CD4-positive, alpha-beta T cell (primary cell): ENCODE measurements at regions of chr2 and their contacts with region 1.

Region 1: GRCh38 chr2:231463698-231464575 is at the start of gene NCL:
- DNase-seq: peak; percentile 75 to 98 (median 81)
- ATAC-seq: peak; percentile 67
- H3K4me3 ChIP-seq: peak within 1 kb of the TSS; percentile 91
- H3K4me3 Mint-ChIP-seq: peak within 1 kb of the TSS; percentile 93
- H3K27ac ChIP-seq: peak within 1 kb of the TSS; percentile 96 to 97
- H3K27ac Mint-ChIP-seq: peak within 1 kb of the TSS; percentile 99
- H3K4me1 ChIP-seq: peaks cover 57% of the 10 kb centered on the region
- H3K4me1 Mint-ChIP-seq: peaks cover 57% of the 10 kb centered on the region
- H3K27me3 ChIP-seq: no peaks in the 10 kb centered on the region
- H3K27me3 Mint-ChIP-seq: no peaks in the 10 kb centered on the region
- CTCF ChIP-seq: no peak
- total RNA-seq, gene NCL: 387 to 395 TPM

Region 2: DNA sequence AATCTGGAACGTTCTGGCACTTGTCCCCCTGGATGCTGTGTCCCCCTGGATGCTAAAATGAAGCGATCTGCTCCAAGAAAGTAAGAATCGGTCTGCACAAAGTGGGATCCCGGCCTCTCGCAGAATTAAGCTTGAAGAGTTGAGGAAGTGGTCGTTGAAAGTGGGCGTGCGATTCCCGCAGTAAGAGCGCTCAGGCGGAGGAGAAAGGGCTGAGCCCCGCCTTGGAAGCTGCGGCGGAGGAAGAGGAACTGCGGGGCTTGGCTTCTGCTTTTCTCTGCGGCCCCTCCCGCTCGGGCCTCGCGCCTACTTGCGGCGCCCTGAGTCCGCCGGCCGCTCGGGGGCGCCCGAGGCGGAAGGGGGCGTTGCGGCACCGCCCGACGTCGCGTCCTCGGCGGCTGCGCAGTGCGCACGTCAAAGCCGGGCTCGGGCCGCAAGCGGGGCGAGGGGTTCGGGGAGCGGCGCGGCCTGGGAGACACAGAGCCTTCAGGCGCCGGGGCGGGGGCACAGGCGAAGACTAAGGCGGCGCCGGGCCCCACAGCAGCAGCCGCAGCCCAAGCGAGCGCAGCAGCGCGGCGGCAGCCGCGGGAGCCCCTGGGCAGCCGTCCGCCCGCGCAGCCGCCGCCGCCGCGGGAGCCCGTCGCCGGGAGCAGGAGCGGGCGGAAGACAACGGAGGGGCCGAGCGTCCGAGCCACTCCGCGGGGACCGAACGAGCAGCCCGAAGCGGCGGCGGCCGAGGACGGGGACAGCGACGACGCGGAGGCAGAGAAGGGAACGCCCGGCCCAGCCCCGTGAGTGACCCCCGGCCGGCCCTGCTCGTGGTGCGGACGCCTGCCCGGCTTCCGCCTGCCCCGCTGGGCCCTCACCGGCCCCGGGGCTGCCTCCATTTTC is 751.2 kb before region 1 on chr2 and contains the start of gene CAB39:
- CTCF ChIA-PET with region 1: no interaction called
- POLR2A ChIA-PET with region 1: interaction called, 5 read pairs
- intact Hi-C with region 1: loop called in 1 of 2 experiments (anchors 10 kb)
- DNase-seq: peak; percentile 73 to 97 (median 84)
- ATAC-seq: peak; percentile 81
- H3K4me3 ChIP-seq: peak within 1 kb of the TSS; percentile 88
- H3K4me3 Mint-ChIP-seq: peak within 1 kb of the TSS; percentile 93
- H3K27ac ChIP-seq: peak within 1 kb of the TSS; percentile 63 to 84
- H3K27ac Mint-ChIP-seq: peak within 1 kb of the TSS; percentile 94
- H3K4me1 ChIP-seq: peaks cover 31% of the 10 kb centered on the region
- H3K4me1 Mint-ChIP-seq: peaks cover 48% of the 10 kb centered on the region
- H3K27me3 ChIP-seq: no peaks in the 10 kb centered on the region
- H3K27me3 Mint-ChIP-seq: no peaks in the 10 kb centered on the region
- CTCF ChIP-seq: peak; percentile 75
- total RNA-seq, gene CAB39: 44.8 to 45.3 TPM

Region 3: DNA sequence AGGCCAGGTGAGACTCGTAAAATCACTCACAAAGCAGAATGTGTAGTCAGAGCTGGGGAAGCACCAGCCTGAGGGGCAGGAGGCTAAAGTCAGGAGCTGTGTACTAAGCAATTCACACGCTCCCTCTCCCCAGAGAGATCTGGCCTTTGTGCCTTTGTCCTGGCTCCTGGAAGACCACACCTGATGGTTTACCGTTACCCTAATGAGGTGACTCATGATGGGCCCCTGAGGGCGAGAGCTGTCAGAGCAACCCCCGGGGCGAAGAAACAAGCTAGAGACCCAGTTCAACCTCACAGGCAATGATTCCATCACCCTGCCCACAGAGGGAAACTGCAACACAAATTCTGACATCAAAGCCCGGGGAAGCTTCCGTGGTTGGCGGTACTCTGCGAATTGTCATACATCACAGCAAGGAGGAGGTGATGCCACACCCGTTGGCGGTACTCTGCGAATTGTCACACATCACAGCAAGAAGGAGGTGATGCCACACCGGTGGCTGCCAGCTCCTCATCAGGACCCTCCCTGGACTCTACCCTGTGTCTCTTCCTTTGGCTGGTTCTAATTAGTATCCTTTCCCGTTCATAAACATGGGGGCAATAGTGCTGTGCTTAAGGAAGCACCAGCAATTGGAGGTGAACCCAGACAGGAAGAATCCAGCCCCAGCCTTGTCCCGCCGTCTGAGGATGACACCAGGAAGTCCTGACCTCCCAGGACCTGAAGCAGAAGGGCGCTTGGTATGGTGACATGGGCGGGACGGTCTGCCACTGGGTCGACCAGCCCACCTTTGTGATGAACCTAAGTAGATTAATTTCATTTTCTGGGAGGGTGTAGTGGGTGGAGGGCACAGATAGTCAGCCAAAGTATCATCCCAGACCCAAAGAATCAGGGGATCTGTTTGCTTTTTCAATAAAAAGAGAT is 37.9 kb before region 1 on chr2:
- CTCF ChIA-PET with region 1: no interaction called
- POLR2A ChIA-PET with region 1: interaction called, 3 read pairs
- intact Hi-C with region 1: loop called in 1 of 2 experiments (anchors 5 kb)
- DNase-seq: peak in 8 of 14 experiments; percentile 18 to 90 (median 68)
- ATAC-seq: peak; percentile 89
- H3K4me3 ChIP-seq: no peak overlapping the region
- H3K4me3 Mint-ChIP-seq: no peak overlapping the region
- H3K27ac ChIP-seq: no peak overlapping the region
- H3K27ac Mint-ChIP-seq: peak overlapping the region; percentile 79
- H3K4me1 ChIP-seq: peaks cover 14% of the 10 kb centered on the region
- H3K4me1 Mint-ChIP-seq: peaks cover 14% of the 10 kb centered on the region
- H3K27me3 ChIP-seq: no peaks in the 10 kb centered on the region
- H3K27me3 Mint-ChIP-seq: no peaks in the 10 kb centered on the region
- CTCF ChIP-seq: no peak

Region 4: DNA sequence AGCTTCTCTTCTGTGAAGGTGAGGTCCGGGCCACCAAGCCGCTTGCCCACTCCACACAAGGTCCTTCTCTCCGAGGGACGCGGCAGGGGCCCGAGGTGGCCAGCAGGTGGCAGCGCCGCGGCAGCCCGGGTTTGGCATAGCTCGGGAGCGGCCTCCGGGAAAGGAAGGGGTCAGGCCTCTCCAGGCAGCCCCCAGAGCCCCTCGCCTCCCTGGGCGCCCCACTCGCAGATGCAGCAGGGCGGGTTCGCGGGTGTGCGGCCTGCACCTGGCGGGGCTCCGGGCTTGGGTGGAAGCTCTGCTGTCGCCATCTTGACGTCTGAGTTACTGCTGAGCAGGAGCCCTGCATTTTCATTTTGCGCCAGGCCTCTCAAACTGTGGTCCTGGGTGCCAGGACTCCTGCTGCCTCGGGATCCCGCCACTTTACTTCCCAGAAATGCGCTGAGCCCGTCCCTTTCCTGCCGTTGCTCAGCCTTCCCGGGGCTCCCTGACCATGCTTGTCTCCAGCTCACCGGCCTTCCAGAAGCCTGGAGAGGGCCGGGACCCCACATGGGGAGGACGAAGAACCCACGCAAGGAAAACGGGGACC is 19.0 kb after region 1 on chr2:
- CTCF ChIA-PET with region 1: interaction called, 23 read pairs
- POLR2A ChIA-PET with region 1: interaction called, 174 read pairs
- intact Hi-C with region 1: loop called (anchors 2 kb)
- DNase-seq: peak; percentile 46 to 85 (median 65)
- ATAC-seq: peak; percentile 77
- H3K4me3 ChIP-seq: peak overlapping the region; percentile 78
- H3K4me3 Mint-ChIP-seq: peak overlapping the region; percentile 78
- H3K27ac ChIP-seq: peak overlapping the region; percentile 70 to 88
- H3K27ac Mint-ChIP-seq: peak overlapping the region; percentile 87
- H3K4me1 ChIP-seq: peaks cover 21% of the 10 kb centered on the region
- H3K4me1 Mint-ChIP-seq: peaks cover 11% of the 10 kb centered on the region
- H3K27me3 ChIP-seq: no peaks in the 10 kb centered on the region
- H3K27me3 Mint-ChIP-seq: no peaks in the 10 kb centered on the region
- CTCF ChIP-seq: peak; percentile 91

Region 5: GRCh38 chr2:231612179-231613053 is 148.5 kb after region 1 on chr2:
- CTCF ChIA-PET with region 1: no interaction called
- POLR2A ChIA-PET with region 1: interaction called, 10 read pairs
- intact Hi-C with region 1: no loop called
- DNase-seq: peak; percentile 79 to 93 (median 86)
- ATAC-seq: peak; percentile 78
- H3K4me3 ChIP-seq: peak overlapping the region; percentile 59
- H3K4me3 Mint-ChIP-seq: peak overlapping the region; percentile 90
- H3K27ac ChIP-seq: no peak overlapping the region
- H3K27ac Mint-ChIP-seq: peak overlapping the region; percentile 74
- H3K4me1 ChIP-seq: peaks cover 34% of the 10 kb centered on the region
- H3K4me1 Mint-ChIP-seq: peaks cover 47% of the 10 kb centered on the region
- H3K27me3 ChIP-seq: no peaks in the 10 kb centered on the region
- H3K27me3 Mint-ChIP-seq: no peaks in the 10 kb centered on the region
- CTCF ChIP-seq: peak; percentile 89

Region 6: GRCh38 chr2:231713730-231714430 is 249.9 kb after region 1 on chr2:
- CTCF ChIA-PET with region 1: interaction called, 3 read pairs
- POLR2A ChIA-PET with region 1: interaction called, 97 read pairs
- intact Hi-C with region 1: loop called in 1 of 2 experiments (anchors 5 kb)
- DNase-seq: peak; percentile 86 to 96 (median 92)
- ATAC-seq: peak; percentile 47
- H3K4me3 ChIP-seq: no peak overlapping the region
- H3K4me3 Mint-ChIP-seq: peak overlapping the region; percentile 87
- H3K27ac ChIP-seq: peak overlapping the region; percentile 49 to 57
- H3K27ac Mint-ChIP-seq: peak overlapping the region; percentile 100
- H3K4me1 ChIP-seq: peaks cover 52% of the 10 kb centered on the region
- H3K4me1 Mint-ChIP-seq: peaks cover 42% of the 10 kb centered on the region
- H3K27me3 ChIP-seq: no peaks in the 10 kb centered on the region
- H3K27me3 Mint-ChIP-seq: peaks cover 4% of the 10 kb centered on the region
- CTCF ChIP-seq: peak; percentile 97

Region 7: DNA sequence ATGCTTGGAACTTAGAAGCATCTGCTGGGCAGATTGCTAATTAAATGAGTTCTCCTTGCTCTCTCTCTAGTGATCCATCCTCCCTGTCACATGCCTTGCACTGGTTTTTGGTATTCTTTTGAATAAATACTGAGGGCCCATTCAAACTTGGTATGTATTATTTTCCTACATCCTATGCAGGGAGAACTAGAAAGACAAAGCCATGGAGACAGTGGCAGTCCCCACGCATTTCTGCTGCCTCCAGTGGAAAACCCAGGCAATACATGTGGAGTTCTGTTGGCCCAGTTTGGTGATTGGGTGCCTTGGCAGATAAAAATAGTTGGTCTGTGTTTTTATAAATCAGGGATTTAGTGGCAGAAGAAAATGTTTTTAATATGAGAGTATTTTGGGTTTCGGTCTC is 566.3 kb after region 1 on chr2:
- CTCF ChIA-PET with region 1: no interaction called
- POLR2A ChIA-PET with region 1: no interaction called
- intact Hi-C with region 1: no loop called
- DNase-seq: no peak
- ATAC-seq: no peak
- H3K4me3 ChIP-seq: no peak overlapping the region
- H3K4me3 Mint-ChIP-seq: no peak overlapping the region
- H3K27ac ChIP-seq: no peak overlapping the region
- H3K27ac Mint-ChIP-seq: no peak overlapping the region
- H3K4me1 ChIP-seq: no peaks in the 10 kb centered on the region
- H3K4me1 Mint-ChIP-seq: peaks cover 28% of the 10 kb centered on the region
- H3K27me3 ChIP-seq: no peaks in the 10 kb centered on the region
- H3K27me3 Mint-ChIP-seq: no peaks in the 10 kb centered on the region
- CTCF ChIP-seq: no peak

Region 8: DNA sequence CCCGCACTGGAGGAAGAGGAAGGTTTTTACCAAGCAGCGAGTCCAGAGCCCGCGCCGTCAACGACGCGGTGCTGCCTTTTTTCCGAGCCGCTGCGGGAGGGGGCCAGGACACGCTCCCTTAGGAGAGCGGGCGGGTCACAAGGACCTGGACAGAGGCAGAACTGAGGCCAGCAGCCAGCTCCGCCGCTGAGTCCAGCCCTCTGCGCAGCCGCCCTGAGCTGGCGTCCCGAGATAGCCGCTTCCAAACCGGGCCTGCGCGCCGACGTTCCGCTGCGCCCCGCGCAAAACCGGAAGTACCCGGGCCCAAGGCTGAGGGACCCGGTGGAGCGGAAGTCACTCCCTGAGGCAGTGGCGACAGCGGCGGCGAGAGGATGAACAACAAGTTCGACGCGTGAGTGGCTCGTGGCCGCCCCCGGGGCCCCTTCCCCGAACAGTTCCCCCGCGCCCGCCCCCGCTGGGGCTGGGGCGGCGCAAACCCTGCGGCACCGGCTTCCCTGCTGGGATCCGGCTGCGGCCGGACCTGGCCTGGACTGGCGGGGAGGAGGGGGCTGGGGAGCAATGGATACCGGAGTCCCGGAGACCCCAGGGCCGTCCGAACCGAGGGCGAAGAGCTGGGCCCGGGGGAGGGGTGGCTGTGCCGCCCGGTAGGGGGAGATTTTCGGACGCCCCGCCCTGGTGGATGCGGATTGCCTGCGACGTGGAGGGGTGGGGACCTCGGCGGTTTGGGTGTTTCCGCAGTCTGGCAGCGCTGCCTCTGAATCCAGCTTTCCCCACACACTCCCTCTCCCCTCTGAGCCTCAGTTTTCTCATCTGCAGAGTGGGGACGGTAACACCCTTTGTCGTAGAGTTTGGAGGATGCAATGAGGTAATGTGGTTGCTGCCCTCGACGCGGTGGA is 1086.7 kb after region 1 on chr2 and contains the starts of genes EIF4E2 and TIGD1:
- CTCF ChIA-PET with region 1: no interaction called
- POLR2A ChIA-PET with region 1: interaction called, 11 read pairs
- intact Hi-C with region 1: no loop called
- DNase-seq: peak; percentile 85 to 95 (median 90)
- ATAC-seq: peak; percentile 83
- H3K4me3 ChIP-seq: peak within 1 kb of the TSS; percentile 99
- H3K4me3 Mint-ChIP-seq: peak within 1 kb of the TSS; percentile 98
- H3K27ac ChIP-seq: peak within 1 kb of the TSS; percentile 91 to 95
- H3K27ac Mint-ChIP-seq: peak within 1 kb of the TSS; percentile 97
- H3K4me1 ChIP-seq: peaks cover 59% of the 10 kb centered on the region
- H3K4me1 Mint-ChIP-seq: peaks cover 85% of the 10 kb centered on the region
- H3K27me3 ChIP-seq: no peaks in the 10 kb centered on the region
- H3K27me3 Mint-ChIP-seq: no peaks in the 10 kb centered on the region
- CTCF ChIP-seq: peak; percentile 62
- total RNA-seq, gene EIF4E2: 45.9 to 46.0 TPM
- total RNA-seq, gene TIGD1: 22.1 to 22.2 TPM